ENCODE measurements at regions of chr19 and their contacts with region 1.

Region 1: GRCh38 chr19:2543463-2544442 is 67.8 kb downstream of the GADD45B start:
- DNase-seq: peak; percentile 96
- H3K4me3 ChIP-seq: no peak overlapping the region
- H3K27ac ChIP-seq: peak overlapping the region; percentile 51
- H3K4me1 ChIP-seq: peaks cover 36% of the 10 kb centered on the region
- H3K27me3 ChIP-seq: no peaks in the 10 kb centered on the region
- CTCF ChIP-seq: peak; percentile 6 to 56

Region 2: GRCh38 chr19:1747285-1748114 is 796.3 kb before region 1 on chr19:
- CTCF ChIA-PET with region 1: no interaction called
- dilution Hi-C with region 1: no loop called
- in situ Hi-C with region 1: no loop called
- intact Hi-C with region 1: loop called (anchors 10 kb)
- DNase-seq: peak; percentile 99
- H3K4me3 ChIP-seq: peak overlapping the region; percentile 47 to 55 (median 52)
- H3K27ac ChIP-seq: peak overlapping the region; percentile 87
- H3K4me1 ChIP-seq: peaks cover 37% of the 10 kb centered on the region
- H3K27me3 ChIP-seq: peaks cover 15% of the 10 kb centered on the region
- CTCF ChIP-seq: no peak

Region 3: DNA sequence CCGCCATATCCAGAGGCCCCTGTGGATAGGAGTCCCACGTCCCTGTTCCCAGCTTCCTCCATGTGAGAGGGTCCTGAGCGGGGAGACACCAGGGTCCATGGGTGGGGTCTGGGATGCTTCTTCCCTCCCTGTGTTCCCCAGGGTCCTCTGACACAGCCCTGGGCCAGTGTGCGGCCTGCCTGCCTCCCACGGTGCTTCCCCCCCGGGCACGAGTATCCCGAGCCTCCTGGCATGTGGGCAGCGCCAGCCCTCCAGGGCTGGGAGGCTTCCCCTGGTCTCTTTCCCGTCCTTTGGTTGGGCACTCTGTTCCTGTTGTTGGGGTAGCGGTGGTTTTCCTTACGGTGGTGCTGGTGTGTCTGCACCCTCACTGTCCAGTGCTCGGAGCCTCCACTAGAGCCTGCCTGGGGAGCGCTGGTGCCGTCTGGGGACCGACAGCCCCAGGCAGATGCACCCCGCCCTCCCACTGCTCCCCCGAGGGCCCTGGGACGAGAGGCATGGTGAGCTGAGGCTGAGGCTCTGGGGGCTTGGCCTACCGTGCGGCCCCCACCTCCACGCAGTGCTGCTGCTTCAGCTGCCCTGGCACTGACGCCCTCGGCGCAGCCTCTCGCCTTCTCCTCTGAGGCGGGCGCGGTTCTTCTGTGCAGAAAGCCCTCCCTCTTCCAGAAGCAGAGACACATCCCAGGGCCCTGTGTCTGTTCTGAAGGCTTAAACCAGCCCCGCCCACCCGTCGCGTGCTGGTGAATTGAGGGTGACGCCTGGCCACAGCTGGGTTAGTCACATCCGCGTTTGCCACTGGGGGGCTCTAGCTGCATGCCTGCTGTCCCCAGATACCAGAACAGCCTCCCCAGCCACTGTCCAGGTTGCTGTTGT is 335.5 kb before region 1 on chr19:
- CTCF ChIA-PET with region 1: no interaction called
- dilution Hi-C with region 1: no loop called
- in situ Hi-C with region 1: no loop called
- intact Hi-C with region 1: no loop called
- DNase-seq: no peak
- H3K4me3 ChIP-seq: no peak overlapping the region
- H3K27ac ChIP-seq: no peak overlapping the region
- H3K4me1 ChIP-seq: no peaks in the 10 kb centered on the region
- H3K27me3 ChIP-seq: no peaks in the 10 kb centered on the region
- CTCF ChIP-seq: no peak

Region 4: DNA sequence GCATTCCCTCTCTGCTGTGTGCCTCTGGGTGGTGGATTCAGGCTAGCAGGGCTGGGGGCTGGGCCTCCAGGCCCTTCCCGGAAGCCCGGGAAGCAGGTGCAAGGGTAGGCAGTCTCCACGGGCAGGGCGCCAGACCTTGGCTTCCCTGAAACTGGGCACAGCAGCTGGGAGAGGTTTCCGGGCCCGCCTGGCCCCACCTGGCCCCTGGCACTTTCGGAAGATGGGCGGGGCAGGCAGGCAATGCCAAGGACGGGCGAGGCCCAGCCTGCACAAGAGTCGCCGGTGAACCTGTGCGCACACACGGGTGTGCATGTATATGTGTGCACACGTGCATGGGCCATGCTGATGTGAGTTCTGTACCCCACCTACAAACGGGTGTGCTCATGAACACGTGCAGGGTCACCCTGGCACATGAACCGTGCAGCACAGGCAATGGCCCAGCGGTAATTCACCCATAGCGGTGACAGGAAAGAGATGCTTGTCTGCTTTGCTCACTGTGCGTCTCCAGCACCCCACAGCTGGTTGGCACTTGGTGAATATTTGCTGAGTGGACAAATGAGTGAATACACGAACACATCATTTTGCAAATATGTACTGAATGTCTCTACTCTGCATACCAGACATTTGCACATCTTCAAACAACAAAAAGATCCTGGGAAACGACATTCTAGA is 52.5 kb before region 1 on chr19:
- CTCF ChIA-PET with region 1: no interaction called
- dilution Hi-C with region 1: no loop called
- in situ Hi-C with region 1: no loop called
- intact Hi-C with region 1: loop called (anchors 1 kb)
- DNase-seq: peak; percentile 78
- H3K4me3 ChIP-seq: no peak overlapping the region
- H3K27ac ChIP-seq: peak overlapping the region; percentile 49
- H3K4me1 ChIP-seq: peaks cover 42% of the 10 kb centered on the region
- H3K27me3 ChIP-seq: no peaks in the 10 kb centered on the region
- CTCF ChIP-seq: no peak

Region 5: GRCh38 chr19:2529473-2529918 is 14.3 kb before region 1 on chr19:
- CTCF ChIA-PET with region 1: no interaction called
- dilution Hi-C with region 1: no loop called
- in situ Hi-C with region 1: no loop called
- intact Hi-C with region 1: loop called (anchors 1 kb)
- DNase-seq: peak; percentile 98
- H3K4me3 ChIP-seq: no peak overlapping the region
- H3K27ac ChIP-seq: peak overlapping the region; percentile 49
- H3K4me1 ChIP-seq: peaks cover 45% of the 10 kb centered on the region
- H3K27me3 ChIP-seq: no peaks in the 10 kb centered on the region
- CTCF ChIP-seq: no peak

Region 6: GRCh38 chr19:2578901-2579677 is 35.3 kb after region 1 on chr19:
- CTCF ChIA-PET with region 1: no interaction called
- dilution Hi-C with region 1: no loop called
- in situ Hi-C with region 1: no loop called
- intact Hi-C with region 1: loop called (anchors 1 kb)
- DNase-seq: peak; percentile 69
- H3K4me3 ChIP-seq: peak overlapping the region; percentile 26 to 53 (median 50)
- H3K27ac ChIP-seq: no peak overlapping the region
- H3K4me1 ChIP-seq: peaks cover 20% of the 10 kb centered on the region
- H3K27me3 ChIP-seq: no peaks in the 10 kb centered on the region
- CTCF ChIP-seq: peak; percentile 62 to 87

Region 7: GRCh38 chr19:2627319-2627829 is 83.6 kb after region 1 on chr19:
- CTCF ChIA-PET with region 1: no interaction called
- dilution Hi-C with region 1: no loop called
- in situ Hi-C with region 1: no loop called
- intact Hi-C with region 1: loop called (anchors 5 kb)
- DNase-seq: peak; percentile 99
- H3K4me3 ChIP-seq: no peak overlapping the region
- H3K27ac ChIP-seq: peak overlapping the region; percentile 85
- H3K4me1 ChIP-seq: peaks cover 22% of the 10 kb centered on the region
- H3K27me3 ChIP-seq: no peaks in the 10 kb centered on the region
- CTCF ChIP-seq: no peak

Measured in mammary epithelial cell (primary cell).